Tibial artery (tissue), 4 donors: ENCODE measurements at regions of chr3 and their contacts with region 1.

Region 1: GRCh38 chr3:71229905-71230657 is 353.4 kb downstream of the FOXP1 start:
- DNase-seq: no peak
- H3K4me3 ChIP-seq: peak overlapping the region in 1 of 2 donors; percentile 3
- H3K27ac ChIP-seq: peak overlapping the region; percentile 20 to 26
- H3K4me1 ChIP-seq: peaks cover 0 to 69% (median 16%) of the 10 kb centered on the region in 4 donors
- H3K27me3 ChIP-seq: no peaks in the 10 kb centered on the region
- CTCF ChIP-seq: no peak

Region 2: DNA sequence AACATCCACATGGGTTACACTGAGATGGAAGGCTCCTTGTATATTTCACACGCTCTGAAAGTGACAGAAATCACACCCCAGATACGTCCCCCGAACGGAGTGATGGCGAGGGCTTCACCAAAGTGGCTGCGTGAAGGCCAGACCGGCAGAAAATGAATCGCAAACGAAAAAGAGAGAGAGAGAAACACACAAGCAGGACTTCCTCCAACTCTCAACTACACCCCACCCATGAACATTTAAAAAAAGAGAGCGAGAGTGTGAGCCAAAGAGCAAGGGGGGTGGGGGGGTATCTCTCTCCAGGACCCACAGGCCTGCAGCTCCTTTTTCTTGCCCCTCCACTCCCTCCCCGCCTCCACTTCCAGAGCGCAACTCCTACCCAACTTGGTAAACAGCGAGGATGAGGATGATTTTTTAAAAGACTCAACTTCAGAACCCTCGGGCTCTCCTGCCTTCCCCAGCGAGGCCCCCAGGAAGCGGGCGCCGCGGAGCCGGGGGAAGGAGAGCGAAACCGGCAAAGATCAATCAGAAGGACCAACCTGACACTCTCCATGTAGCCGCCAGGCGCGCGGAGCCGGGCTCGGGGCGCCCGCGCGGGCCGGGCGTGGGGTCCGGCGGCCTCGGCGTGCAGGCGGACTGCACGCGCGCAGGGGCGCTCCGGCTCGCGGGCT is 165.7 kb before region 1 on chr3:
- intact Hi-C with region 1: loop called (anchors 10 kb)
- DNase-seq: peak; percentile 56 to 79
- H3K4me3 ChIP-seq: peak overlapping the region; percentile 75 to 77
- H3K27ac ChIP-seq: peak overlapping the region; percentile 94 to 99
- H3K4me1 ChIP-seq: peaks cover 0 to 65% (median 37%) of the 10 kb centered on the region in 4 donors
- H3K27me3 ChIP-seq: no peaks in the 10 kb centered on the region
- CTCF ChIP-seq: peak in 1 of 2 experiments; percentile 44

Region 3: DNA sequence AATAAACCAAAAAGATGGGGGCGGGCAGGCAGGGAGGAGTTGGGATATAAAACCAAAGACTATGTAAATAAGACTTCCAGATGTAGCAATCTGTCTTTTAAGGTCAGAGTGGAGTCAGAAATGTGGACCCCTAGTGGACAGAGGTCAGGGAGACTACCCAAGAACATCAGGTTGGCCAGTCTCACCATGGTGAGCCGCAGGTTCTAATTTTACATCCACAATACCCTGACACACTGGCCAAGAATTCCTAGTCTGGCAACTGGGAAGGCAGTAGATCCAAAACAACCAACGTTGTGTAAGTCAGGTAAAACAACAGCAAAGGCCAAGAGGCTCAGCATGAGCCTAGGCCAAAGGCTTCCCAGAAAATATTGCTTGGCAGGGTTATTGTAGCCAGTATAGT is 150.0 kb after region 1 on chr3:
- intact Hi-C with region 1: no loop called
- DNase-seq: no peak
- H3K4me3 ChIP-seq: no peak overlapping the region
- H3K27ac ChIP-seq: no peak overlapping the region
- H3K4me1 ChIP-seq: peaks cover 0 to 25% (median 10%) of the 10 kb centered on the region in 4 donors
- H3K27me3 ChIP-seq: no peaks in the 10 kb centered on the region
- CTCF ChIP-seq: no peak

Region 4: GRCh38 chr3:71778353-71778752 is 548.3 kb after region 1 on chr3:
- intact Hi-C with region 1: no loop called
- DNase-seq: no peak
- H3K4me3 ChIP-seq: no peak overlapping the region
- H3K27ac ChIP-seq: no peak overlapping the region
- H3K4me1 ChIP-seq: no peaks in the 10 kb centered on the region
- H3K27me3 ChIP-seq: peaks cover 0 to 64% of the 10 kb centered on the region in 2 donors
- CTCF ChIP-seq: no peak